Ascending aorta (tissue), 2 donors: ENCODE measurements at regions of chr2 and their contacts with region 1.

Region 1: DNA sequence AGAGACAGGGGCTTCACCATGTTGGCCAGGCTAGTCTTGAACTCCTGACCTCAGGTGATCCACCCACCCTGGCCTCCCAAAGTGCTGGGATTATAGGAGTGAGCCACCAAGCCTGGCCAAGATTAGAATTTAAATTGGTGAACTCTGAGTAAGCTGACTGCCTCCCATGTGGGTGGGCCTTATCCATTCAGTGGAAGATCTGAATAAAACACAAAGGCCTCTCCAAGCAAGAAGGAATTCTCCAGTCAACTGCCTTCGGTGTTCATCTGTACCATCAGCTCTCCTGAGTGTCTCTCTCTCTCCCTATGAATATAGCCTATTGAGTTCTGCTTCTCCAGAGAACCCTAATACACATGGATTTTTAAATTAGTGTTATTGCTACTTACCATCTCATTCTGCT is 36.4 kb downstream of the FBXO11 start:
- DNase-seq: no peak
- H3K4me3 ChIP-seq: no peak overlapping the region
- H3K27ac ChIP-seq: peak overlapping the region; percentile 2 to 42
- H3K4me1 ChIP-seq: peaks cover 2 to 16% of the 10 kb centered on the region in 2 donors
- H3K27me3 ChIP-seq: no peaks in the 10 kb centered on the region
- CTCF ChIP-seq: no peak

Region 2: GRCh38 chr2:47906157-47907038 is 36.5 kb after region 1 on chr2 and contains the start of gene FBXO11:
- intact Hi-C with region 1: loop called (anchors 2 kb)
- DNase-seq: peak; percentile 96 to 99
- H3K4me3 ChIP-seq: peak within 1 kb of the TSS; percentile 99 to 100
- H3K27ac ChIP-seq: peak within 1 kb of the TSS; percentile 99 to 100
- H3K4me1 ChIP-seq: peaks cover 0 to 12% of the 10 kb centered on the region in 2 donors
- H3K27me3 ChIP-seq: no peaks in the 10 kb centered on the region
- CTCF ChIP-seq: peak; percentile 53 to 67 (median 65)
- total RNA-seq, gene FBXO11: 15.1 TPM

Region 3: DNA sequence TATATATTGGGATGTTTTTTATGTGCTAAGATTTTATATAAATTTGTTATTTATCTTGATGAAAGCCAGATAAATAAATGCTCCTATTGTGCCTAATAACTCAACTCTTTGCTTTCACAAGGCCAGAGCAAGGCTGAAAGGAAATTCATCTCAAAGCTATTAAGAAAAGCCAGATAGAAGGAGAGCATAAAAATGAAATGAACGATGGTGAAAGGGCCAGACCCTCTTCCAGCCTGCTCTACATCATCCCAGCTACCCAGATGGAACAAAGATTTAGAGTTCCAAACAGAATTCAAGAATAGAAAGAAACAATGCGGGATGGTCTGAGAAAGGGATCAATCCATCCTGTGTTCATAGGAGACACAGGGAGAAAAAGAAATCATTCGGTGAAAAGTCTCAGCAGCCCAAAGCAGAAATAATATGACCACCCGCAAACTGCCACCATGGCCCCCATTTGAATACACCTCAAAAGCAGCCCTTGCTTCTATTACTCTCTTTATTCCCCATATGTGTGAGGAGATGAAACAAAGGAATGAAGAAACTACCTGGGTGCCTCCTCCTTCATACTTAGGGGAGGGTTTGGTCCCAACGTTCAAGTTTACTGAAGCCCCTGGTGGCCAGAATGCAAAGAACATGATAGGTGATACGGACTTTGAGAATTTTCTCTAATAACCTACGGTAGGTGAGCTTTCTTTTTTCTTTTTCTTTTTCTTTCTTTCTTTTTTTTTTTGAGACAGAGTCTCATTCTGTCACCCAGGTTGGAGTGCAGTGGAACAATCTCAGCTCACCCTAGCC is 146.6 kb after region 1 on chr2:
- intact Hi-C with region 1: no loop called
- DNase-seq: no peak
- H3K4me3 ChIP-seq: no peak overlapping the region
- H3K27ac ChIP-seq: no peak overlapping the region
- H3K4me1 ChIP-seq: no peaks in the 10 kb centered on the region
- H3K27me3 ChIP-seq: no peaks in the 10 kb centered on the region
- CTCF ChIP-seq: no peak

Region 4: DNA sequence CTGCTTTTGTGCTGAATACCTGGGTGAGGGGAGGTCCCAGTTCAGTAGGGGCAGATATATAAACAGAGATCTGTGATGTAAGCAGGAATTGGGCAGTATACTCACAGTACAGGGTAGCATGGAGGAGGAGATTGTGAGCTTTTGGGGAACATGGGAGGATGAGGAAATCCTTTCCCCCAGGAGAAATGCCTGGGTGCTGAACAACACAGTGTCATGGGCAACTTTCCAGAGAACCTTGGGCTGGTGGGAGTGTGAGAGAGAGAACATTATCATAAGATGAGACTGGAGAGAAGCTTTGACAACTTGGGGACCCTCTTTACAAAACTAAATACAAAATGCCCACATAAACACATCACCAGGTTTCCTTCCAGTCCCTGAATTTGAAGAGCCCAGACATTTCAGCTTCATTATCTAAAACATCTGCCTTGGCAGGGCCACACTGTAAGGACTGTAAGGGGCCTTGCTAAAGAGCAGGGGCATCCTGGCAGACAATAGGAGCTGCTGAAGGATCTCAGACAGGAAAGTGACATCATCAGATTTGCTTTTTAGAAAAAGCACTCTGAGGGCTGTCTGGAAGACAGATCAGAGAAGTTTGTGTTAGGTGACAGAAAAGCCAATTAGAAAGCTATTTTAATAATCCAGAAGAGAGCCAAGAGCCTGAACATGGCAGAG is 339.5 kb after region 1 on chr2:
- intact Hi-C with region 1: no loop called
- DNase-seq: no peak
- H3K4me3 ChIP-seq: no peak overlapping the region
- H3K27ac ChIP-seq: no peak overlapping the region
- H3K4me1 ChIP-seq: no peaks in the 10 kb centered on the region
- H3K27me3 ChIP-seq: no peaks in the 10 kb centered on the region
- CTCF ChIP-seq: no peak